Activated naive CD4-positive, alpha-beta T cell treated with anti-CD3 and anti-CD28 coated beads for 36 hours (primary cell): ENCODE measurements at regions of chr9 and their contacts with region 1.

Region 1: DNA sequence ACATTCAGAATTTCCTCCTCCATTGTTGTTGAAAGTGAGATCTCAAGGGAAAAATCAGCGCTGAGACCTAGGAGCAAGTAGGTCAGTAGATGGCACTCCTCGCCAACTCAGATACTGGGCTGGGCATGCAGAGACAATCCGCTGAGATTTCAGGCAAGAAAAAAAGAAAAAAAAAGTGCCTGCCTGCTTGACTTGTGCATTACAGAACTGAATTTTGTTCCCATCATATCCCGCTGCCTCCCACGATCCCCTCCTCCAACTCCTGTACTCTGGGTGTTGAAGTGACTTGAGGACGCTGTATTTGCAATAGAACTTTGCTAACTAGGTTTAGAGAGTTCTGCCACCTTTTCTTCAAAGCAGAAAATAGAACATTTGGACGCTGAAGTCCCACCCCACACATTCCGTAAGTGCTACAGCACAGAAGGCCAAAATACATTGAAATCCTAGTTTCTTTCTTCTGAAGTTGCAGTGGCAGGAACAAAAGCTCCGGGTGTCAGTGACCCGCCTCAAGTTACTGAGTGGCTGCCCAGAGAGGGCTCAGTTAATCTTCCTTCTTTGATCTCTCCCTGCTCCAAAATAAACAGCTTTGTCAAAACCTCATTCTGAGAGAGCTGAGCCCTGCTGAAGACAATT is 265.8 kb downstream of the MLLT3 start:
- DNase-seq: peak; percentile 85
- H3K4me3 Mint-ChIP-seq: no peak overlapping the region
- H3K27ac Mint-ChIP-seq: peak overlapping the region; percentile 46
- H3K4me1 Mint-ChIP-seq: peaks cover 72% of the 10 kb centered on the region
- H3K27me3 Mint-ChIP-seq: no peaks in the 10 kb centered on the region

Region 2: GRCh38 chr9:19493174-19493811 is 863.2 kb before region 1 on chr9:
- CTCF ChIA-PET with region 1: no interaction called
- intact Hi-C with region 1: loop called (anchors 5 kb)
- DNase-seq: peak; percentile 68
- H3K4me3 Mint-ChIP-seq: peak overlapping the region; percentile 16
- H3K27ac Mint-ChIP-seq: peak overlapping the region; percentile 33
- H3K4me1 Mint-ChIP-seq: peaks cover 20% of the 10 kb centered on the region
- H3K27me3 Mint-ChIP-seq: peaks cover 5% of the 10 kb centered on the region

Region 3: GRCh38 chr9:19976226-19976625 is 380.3 kb before region 1 on chr9:
- CTCF ChIA-PET with region 1: no interaction called
- intact Hi-C with region 1: loop called (anchors 2 kb)
- DNase-seq: peak; percentile 69
- H3K4me3 Mint-ChIP-seq: no peak overlapping the region
- H3K27ac Mint-ChIP-seq: peak overlapping the region; percentile 83
- H3K4me1 Mint-ChIP-seq: peaks cover 28% of the 10 kb centered on the region
- H3K27me3 Mint-ChIP-seq: no peaks in the 10 kb centered on the region

Region 4: GRCh38 chr9:20508242-20508641 is 151.7 kb after region 1 on chr9:
- CTCF ChIA-PET with region 1: no interaction called
- intact Hi-C with region 1: loop called (anchors 2 kb)
- DNase-seq: no peak
- H3K4me3 Mint-ChIP-seq: peak overlapping the region; percentile 40
- H3K27ac Mint-ChIP-seq: peak overlapping the region; percentile 13
- H3K4me1 Mint-ChIP-seq: peaks cover 80% of the 10 kb centered on the region
- H3K27me3 Mint-ChIP-seq: no peaks in the 10 kb centered on the region

Region 5: DNA sequence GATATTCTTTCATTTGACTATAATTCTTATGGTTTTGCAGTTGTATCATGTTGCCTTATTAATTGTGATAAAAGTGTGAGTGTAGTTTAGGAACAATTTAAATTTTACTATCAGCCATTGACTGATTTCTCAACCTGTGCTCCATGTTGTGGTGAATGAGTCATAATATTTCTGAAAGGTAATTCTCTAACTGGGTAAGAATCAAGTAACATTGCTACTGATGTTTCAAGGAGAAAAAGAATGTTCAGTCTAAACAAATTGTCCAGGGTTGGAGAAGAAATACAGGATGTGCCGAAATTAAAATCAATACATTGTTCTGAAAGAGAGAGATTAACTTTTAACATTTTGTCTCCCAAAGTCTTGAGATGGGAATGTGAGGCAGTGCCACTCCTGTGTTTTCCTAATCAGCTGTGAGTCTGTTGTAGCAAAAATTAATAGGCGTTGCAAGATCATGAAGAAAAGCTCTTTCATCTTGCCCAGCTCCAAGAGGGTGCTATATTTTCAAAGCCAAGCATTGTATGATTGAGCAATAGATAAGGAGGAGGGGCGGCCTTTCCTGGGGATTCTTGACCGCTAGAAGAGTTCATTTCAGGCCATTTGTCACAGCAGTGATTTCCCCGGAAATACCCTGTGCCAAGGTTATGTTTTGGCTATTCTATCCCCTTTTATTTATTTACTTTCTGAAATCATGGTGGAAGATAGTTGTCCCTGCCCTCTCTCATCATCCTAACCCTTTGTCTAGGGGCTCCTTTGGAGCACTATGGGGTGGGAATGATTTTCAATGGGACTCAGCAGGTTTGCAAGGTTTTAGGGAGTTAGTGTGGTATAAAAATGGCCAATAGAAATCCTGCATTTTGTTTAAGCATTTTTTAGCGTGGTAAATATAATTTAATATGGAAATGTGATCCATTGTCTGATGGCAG is 479.1 kb after region 1 on chr9:
- CTCF ChIA-PET with region 1: no interaction called
- intact Hi-C with region 1: loop called (anchors 10 kb)
- DNase-seq: no peak
- H3K4me3 Mint-ChIP-seq: no peak overlapping the region
- H3K27ac Mint-ChIP-seq: no peak overlapping the region
- H3K4me1 Mint-ChIP-seq: peaks cover 7% of the 10 kb centered on the region
- H3K27me3 Mint-ChIP-seq: no peaks in the 10 kb centered on the region

Region 6: DNA sequence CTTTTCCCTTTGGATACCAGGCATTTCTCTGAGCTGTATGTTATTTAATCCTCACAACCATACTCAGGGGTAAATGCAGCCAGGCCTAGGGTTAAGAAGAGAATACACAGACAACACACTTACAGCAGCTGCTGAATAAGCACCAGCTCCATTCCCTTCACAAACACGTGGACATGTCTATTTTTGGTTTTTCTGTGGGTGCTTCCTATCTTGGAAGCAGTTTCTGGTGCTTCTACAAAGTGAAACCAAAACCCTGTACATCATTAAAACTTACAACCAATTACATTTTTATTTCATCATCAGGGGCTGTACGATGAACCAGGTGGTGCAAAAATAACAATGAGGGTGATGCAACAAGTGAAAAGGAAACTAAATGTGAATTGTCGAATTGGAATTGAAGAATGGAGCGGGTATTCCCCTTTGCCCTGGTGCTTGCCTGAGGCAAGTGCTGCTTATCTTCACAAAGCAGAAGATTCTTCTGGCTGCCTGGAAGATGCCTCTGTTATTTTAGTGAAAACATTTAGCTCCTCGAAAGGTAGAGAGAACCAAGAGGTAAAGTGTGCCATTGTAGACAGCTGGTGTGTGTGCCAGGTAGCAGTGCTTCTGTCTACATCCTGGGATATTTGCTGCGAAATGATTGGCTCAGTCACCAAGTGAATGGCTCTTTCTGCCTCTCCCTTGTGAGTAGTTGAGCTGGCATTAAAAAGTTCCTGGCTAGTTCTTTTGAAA is 739.8 kb after region 1 on chr9:
- CTCF ChIA-PET with region 1: no interaction called
- intact Hi-C with region 1: loop called (anchors 1 kb)
- DNase-seq: peak; percentile 67
- H3K4me3 Mint-ChIP-seq: peak overlapping the region; percentile 76
- H3K27ac Mint-ChIP-seq: peak overlapping the region; percentile 94
- H3K4me1 Mint-ChIP-seq: peaks cover 39% of the 10 kb centered on the region
- H3K27me3 Mint-ChIP-seq: no peaks in the 10 kb centered on the region